ENCODE measurements at regions of chr16 and their contacts with region 1.

Region 1: DNA sequence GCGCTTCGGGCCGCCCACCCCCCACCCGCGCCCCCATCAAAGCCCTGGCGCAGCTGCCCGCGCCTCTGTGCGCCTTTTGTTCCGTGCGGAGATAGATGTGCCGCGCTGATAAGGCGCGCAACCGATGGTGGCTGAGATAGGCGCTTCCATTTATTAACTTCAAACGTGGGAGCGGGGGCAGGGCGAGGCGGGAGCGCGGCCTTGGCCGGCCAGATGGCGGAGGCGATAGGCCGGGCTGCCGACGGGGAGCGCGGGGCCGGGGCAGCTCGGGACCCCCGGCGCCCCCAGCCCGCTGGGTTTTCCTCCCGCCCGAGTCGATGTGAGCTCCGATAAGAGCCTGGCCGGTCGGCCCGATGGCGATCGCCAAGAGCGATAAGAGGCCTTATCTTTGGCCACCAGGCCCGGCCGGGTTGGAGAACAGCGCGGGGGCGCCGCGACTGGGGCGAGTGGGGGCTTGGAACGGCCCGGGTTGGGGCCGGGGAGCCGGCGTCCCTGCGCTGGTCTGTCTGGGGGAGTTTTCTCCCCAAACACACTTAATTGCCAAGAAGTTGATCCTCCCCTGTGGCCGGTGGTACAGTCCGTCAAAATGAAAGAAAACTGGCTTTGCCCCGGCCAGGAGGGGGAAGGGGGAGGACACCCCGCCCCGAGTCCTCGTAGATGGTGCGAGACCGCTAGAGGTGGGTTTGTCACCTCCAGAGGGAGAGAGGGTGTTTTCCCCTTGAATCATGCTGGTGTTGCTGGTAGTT is 2.7 kb downstream of the ZFPM1 start:
- DNase-seq: no peak
- ATAC-seq: peak; percentile 3; the same call in 1 of the 2 replicates
- H3K4me3 ChIP-seq: peak overlapping the region; percentile 51 to 71
- H3K27ac ChIP-seq: peak overlapping the region; percentile 66
- H3K4me1 ChIP-seq: peaks cover 17% of the 10 kb centered on the region
- H3K27me3 ChIP-seq: no peaks in the 10 kb centered on the region
- CTCF ChIP-seq: no peak

Region 2: DNA sequence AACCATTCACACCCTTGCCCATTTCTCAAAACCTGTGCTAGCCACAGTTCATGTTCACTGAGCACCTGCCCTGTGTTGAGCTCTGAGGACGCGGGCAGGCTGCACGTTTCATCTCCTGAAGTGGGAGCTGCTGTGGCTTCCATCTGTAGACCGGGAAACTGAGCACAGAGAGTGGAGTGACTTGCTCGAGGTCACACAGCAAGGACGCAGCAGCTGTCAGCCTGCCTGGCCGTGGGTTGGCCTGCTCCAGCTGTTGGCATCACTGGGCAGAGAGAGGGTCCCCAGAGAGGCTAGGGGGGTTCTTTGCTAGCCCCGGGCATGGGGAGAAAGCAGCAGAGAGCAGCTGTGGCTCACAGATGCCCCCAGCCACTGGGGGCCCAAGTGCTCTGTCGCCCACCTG is 26.1 kb after region 1 on chr16:
- CTCF ChIA-PET with region 1: interaction called, 10 read pairs
- POLR2A ChIA-PET with region 1: no interaction called
- in situ Hi-C with region 1: no loop called
- intact Hi-C with region 1: no loop called
- DNase-seq: no peak
- ATAC-seq: no peak
- H3K4me3 ChIP-seq: no peak overlapping the region
- H3K27ac ChIP-seq: no peak overlapping the region
- H3K4me1 ChIP-seq: peaks cover 6% of the 10 kb centered on the region; the same call in 1 of the 2 replicates
- H3K27me3 ChIP-seq: no peaks in the 10 kb centered on the region
- CTCF ChIP-seq: no peak